ENCODE measurements at regions of chr1 and their contacts with region 1.

Region 1: GRCh38 chr1:15820478-15820877 is 13.0 kb upstream of the UQCRHL start:
- DNase-seq: peak; percentile 72
- H3K4me3 ChIP-seq: no peak overlapping the region
- H3K27ac ChIP-seq: no peak overlapping the region
- H3K4me1 ChIP-seq: peaks cover 12% of the 10 kb centered on the region
- H3K27me3 ChIP-seq: no peaks in the 10 kb centered on the region
- CTCF ChIP-seq: no peak

Region 2: DNA sequence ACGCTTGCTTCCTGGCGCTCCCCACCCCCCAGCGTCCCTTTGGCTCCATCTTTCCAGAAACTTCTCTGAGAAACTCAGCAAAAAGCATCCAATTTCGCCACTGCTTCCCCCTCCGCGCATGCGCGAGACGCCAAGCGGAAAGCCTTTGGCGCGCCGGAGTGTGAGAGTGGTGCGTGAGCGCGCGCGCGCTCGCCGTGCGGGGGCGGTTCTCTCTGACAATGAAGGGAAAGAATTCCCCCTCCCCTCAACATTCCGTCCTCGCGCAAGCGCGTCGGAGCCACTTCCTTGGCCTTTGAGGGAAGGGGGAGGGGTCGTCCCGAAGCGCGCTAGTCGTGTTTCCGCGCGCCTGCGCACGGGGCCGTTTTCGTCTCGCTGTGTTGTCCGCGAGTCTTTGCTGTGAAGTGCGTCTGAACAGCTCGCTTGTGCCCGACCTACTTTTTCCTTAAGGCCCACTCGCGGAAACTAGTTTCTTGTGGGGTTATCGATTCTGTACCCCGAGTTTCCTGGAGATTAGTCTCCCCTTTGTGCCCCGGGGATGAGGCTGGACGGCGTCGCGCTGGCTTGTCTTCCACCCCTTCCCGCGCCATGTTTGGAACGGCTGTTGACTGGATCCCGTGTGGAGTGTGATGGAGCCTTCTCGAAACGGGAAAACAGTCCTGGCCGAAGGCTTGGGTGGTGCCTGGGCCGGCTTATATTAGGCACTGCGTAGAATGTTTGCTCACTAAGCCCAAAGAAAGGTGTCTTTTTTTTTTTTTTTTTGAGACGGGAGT is 15.4 kb after region 1 on chr1:
- CTCF ChIA-PET with region 1: interaction called, 3 read pairs
- dilution Hi-C with region 1: no loop called
- in situ Hi-C with region 1: no loop called
- intact Hi-C with region 1: loop called (anchors 1 kb)
- DNase-seq: peak; percentile 99
- H3K4me3 ChIP-seq: peak overlapping the region; percentile 59 to 87 (median 65)
- H3K27ac ChIP-seq: peak overlapping the region; percentile 91
- H3K4me1 ChIP-seq: peaks cover 27% of the 10 kb centered on the region
- H3K27me3 ChIP-seq: no peaks in the 10 kb centered on the region
- CTCF ChIP-seq: no peak

Region 3: GRCh38 chr1:15866721-15867201 is 46.3 kb after region 1 on chr1:
- CTCF ChIA-PET with region 1: interaction called, 15 read pairs
- dilution Hi-C with region 1: no loop called
- in situ Hi-C with region 1: no loop called
- intact Hi-C with region 1: no loop called
- DNase-seq: peak; percentile 16
- H3K4me3 ChIP-seq: no peak overlapping the region
- H3K27ac ChIP-seq: no peak overlapping the region
- H3K4me1 ChIP-seq: no peaks in the 10 kb centered on the region
- H3K27me3 ChIP-seq: no peaks in the 10 kb centered on the region
- CTCF ChIP-seq: no peak

Region 4: GRCh38 chr1:15918962-15919715 is 98.7 kb after region 1 on chr1:
- CTCF ChIA-PET with region 1: interaction called, 6 read pairs
- dilution Hi-C with region 1: no loop called
- in situ Hi-C with region 1: loop called in 1 of 2 experiments (anchors 25 kb)
- intact Hi-C with region 1: loop called (anchors 1 kb)
- DNase-seq: peak; percentile 91
- H3K4me3 ChIP-seq: peak overlapping the region in 1 of 3 experiments; percentile 14
- H3K27ac ChIP-seq: peak overlapping the region; percentile 88
- H3K4me1 ChIP-seq: peaks cover 53% of the 10 kb centered on the region
- H3K27me3 ChIP-seq: no peaks in the 10 kb centered on the region
- CTCF ChIP-seq: no peak

Region 5: DNA sequence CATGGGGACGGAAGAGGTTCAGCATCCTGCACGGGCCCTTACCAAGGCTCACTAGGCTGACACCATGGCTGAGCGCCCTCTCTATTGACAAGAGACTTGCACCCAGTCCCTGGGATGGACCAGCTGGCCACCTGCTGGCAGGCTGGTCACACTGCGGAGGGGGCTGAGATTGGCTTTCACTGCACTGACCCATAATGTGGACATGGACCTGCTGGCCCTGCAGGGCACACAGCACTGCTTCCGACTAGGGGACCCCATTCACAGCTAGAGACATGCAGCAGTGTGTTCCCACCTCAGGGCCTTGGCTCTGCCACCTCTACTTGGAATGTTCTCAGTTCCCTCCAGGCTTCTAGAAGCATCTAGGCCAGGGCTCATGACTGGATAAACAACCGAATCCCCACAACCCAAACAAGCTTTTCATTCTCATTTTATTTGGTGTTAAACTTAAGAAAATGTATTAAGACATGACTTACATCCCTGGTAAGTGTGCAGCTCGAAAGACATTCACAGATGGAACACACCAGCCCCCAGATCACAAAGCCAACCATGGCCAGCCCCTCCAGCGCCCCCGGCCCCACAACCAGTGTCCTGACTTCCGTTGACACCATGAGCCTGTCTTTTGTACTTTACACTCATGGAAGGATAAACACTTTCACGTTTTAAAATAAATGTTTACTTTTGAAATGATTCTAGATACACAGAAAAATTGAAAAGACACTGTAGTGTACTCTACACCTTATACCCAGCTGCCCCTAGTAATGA is 174.3 kb after region 1 on chr1:
- CTCF ChIA-PET with region 1: no interaction called
- dilution Hi-C with region 1: no loop called
- in situ Hi-C with region 1: loop called in 1 of 2 experiments (anchors 10 kb)
- intact Hi-C with region 1: loop called (anchors 1 kb)
- DNase-seq: peak; percentile 40
- H3K4me3 ChIP-seq: no peak overlapping the region
- H3K27ac ChIP-seq: no peak overlapping the region
- H3K4me1 ChIP-seq: no peaks in the 10 kb centered on the region
- H3K27me3 ChIP-seq: no peaks in the 10 kb centered on the region
- CTCF ChIP-seq: peak; percentile 68 to 84

Measured in mammary epithelial cell (primary cell).